Left cardiac atrium (tissue), 4 donors: ENCODE measurements at regions of chr7 and their contacts with region 1.

Region 1: DNA sequence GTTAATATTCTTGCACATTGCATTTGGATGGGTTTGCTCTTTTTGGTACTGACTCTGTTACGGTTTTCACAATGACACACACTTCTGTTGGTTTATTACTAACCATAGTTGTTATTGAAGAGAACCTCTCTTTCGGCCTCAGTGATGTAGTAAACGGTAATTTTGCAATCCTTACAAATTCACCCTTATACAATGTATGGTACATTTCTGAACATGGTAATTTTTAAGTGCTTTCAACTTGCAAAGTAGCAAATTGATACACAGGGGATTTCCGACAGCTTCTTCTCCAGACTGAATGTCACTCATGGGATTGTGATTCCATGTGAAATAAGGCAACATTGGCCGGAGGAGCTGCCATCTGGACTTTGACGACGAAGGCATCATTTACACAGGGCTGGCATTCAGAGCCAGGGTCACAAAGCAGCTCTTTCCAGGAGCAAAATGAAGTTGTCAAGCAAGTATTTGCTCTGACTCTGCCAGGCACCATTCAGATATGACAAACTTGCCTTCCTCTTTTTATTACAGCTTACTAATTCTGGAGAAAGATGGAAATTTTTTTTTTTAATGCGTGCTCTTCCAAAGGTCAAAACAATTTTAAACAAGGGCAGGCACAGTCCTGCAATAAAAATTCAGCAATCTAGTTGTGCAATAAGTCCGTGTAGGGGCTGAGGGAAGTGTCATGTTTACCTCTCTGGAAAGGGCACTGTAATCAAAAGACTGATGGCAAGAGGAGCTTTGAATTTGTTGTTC is 711.5 kb upstream of the C7orf33 start:
- DNase-seq: no peak
- ATAC-seq: no peak

Region 2: DNA sequence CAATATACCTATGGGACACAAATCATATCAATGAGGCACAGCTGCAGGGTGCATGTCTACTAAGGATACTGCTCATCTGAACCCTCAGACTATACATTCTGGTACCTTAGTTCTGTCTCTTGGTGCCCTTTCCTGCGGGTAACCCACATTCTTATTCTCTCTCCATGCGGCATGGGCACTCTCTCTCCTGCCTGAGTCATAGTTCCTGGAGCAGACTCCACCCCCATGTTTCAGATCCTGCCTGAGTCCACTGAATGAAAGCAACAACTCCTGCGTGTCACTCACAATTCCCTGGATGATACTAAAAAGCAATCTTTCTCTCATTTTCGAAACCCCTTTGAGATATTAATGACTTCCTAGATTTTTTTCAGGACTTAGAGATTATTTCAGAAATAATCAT is 58.3 kb after region 1 on chr7:
- intact Hi-C with region 1: loop called in 1 of 2 experiments (anchors 10 kb)
- DNase-seq: no peak
- ATAC-seq: no peak